Pancreas (tissue), 10 donors: ENCODE measurements at regions of chr13 and their contacts with region 1.

Region 1: DNA sequence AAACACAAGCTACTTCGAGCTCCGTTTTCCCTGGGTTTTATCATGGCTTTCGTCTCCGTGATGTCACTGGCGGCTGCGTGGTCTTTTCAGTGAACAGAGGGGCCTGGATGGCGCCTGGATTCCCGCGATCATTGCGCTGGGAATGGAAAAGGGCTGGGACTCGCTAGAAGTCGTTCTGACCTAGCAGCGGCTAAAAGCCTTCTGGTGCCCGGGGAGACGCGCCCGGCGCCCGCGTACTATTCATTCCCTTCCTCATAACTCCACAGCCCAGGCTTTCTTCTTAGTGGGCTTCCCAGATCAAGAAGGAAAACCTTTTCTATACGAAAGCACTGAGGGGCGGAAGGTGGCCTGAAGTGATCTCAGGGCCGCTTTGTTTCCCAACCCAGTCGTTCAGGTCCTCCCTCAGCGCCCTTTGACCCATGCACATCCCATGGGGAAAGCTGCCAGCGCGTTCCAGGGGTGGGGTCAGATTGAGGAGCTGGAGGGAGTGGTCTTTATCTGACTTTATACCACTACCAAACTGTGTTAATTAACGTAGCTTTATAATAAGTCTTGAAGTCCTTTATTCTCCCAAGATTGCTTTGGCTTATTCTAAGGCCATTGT is 96.6 kb downstream of the ELF1 start:
- DNase-seq: peak in 3 of 6 donors; percentile 25 to 52 (median 31)
- ATAC-seq: no peak
- H3K4me3 ChIP-seq: no peak overlapping the region
- H3K27ac ChIP-seq: no peak overlapping the region
- H3K4me1 ChIP-seq: peaks cover 0 to 8% (median 4%) of the 10 kb centered on the region in 3 donors
- H3K27me3 ChIP-seq: no peaks in the 10 kb centered on the region
- CTCF ChIP-seq: no peak

Region 2: DNA sequence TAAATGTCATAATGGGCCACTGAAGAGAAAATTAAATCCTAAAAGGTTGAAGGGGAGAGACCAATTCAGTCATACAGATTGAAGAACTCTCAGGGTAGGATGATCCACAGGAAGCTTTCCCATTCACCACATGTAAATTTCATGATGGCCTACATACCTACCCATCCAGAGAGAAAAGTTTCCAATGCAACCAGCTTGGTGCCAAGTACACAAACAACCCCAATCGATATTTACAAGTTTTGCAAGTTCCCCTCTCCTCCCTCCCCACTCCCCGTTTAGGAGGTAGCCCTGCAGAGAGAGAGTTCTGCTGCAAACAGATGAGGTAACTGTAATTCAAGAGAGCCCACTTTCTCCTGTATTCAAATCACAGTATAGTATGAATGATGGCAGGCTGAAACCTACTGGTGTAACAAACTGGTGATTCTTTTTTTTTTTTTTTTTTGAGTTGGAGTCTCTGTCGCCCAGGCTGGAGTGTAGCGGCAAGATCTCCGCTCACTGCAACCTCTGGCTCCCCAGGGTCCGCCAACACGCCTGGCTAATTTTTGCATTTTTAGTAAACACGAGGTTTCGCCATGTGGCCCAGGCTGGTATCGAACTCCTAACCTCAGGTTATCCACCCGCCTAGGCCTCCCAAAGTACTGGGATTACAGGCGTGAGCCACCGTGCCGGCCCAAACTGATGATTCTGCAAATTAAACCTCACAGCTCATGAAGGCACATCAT is 270.5 kb before region 1 on chr13:
- intact Hi-C with region 1: no loop called
- DNase-seq: no peak
- ATAC-seq: peak in 1 of 4 donors; percentile 51
- H3K4me3 ChIP-seq: no peak overlapping the region
- H3K27ac ChIP-seq: no peak overlapping the region
- H3K4me1 ChIP-seq: peaks cover 11 to 20% (median 17%) of the 10 kb centered on the region in 3 donors
- H3K27me3 ChIP-seq: no peaks in the 10 kb centered on the region
- CTCF ChIP-seq: no peak

Region 3: DNA sequence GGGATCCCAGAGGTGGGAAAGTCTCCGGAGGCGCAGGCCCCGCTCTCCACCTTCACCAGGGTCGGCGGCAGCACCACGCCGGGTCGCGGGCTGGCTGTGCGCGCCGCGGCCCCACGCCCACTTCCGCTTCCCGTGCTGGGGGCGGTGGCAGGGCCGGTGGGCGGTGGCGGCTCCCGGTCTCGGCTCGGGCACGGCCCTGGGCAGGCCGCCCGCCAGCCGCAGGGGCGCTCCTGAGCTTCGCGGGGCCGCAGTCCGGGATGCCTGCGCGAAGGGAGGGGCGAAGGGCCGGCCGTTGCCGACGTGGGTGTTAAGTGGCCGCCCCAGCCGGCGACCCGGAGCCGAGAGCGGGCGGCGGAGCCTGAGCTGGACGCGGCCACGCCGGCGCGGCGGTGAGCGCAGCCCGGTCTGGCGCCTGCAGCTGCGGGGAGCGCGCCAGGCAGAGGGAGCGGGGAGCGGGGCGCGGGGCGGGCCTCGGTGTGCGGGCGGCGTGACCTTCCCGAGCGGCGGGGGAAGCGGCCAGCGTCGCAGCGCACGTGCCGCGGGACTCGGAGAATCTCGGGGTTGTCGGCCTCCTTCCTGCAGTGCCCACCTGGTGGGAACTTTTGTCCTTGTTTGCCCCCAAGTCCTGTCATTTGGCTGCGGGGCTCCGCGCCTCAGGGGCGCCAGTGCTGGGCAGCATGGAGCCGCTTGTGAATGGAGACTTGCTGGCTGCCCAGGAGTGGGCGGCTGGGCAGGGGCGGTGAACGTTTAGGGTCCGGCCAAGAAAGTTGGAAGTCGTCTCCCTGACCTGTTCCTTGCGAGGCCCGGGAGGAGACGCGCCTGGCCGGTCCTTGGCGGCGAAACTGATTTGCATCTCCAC is 133.0 kb before region 1 on chr13 and contains the start of gene SLC25A15:
- intact Hi-C with region 1: loop called in 1 of 3 experiments (anchors 10 kb)
- DNase-seq: peak; percentile 80 to 94 (median 90)
- ATAC-seq: peak; percentile 90 to 94 (median 93)
- H3K4me3 ChIP-seq: peak within 1 kb of the TSS; percentile 45 to 76 (median 61)
- H3K27ac ChIP-seq: peak within 1 kb of the TSS; percentile 80 to 90 (median 82)
- H3K4me1 ChIP-seq: no peaks in the 10 kb centered on the region
- H3K27me3 ChIP-seq: no peaks in the 10 kb centered on the region
- CTCF ChIP-seq: peak in 1 of 4 donors; percentile 26
- total RNA-seq, gene SLC25A15: 10.1 to 35.9 (median 17.6) TPM